GM10248 (cell line): ENCODE measurements at regions of chr11 and their contacts with region 1.

Region 1: GRCh38 chr11:122754553-122755322 is 83.6 kb upstream of the CRTAM start:
- DNase-seq: peak; percentile 50
- CTCF ChIP-seq: peak; percentile 57

Region 2: GRCh38 chr11:122601141-122602125 is 153.3 kb before region 1 on chr11:
- CTCF ChIA-PET with region 1: no interaction called
- POLR2A ChIA-PET with region 1: no interaction called
- DNase-seq: no peak
- CTCF ChIP-seq: no peak

Region 3: DNA sequence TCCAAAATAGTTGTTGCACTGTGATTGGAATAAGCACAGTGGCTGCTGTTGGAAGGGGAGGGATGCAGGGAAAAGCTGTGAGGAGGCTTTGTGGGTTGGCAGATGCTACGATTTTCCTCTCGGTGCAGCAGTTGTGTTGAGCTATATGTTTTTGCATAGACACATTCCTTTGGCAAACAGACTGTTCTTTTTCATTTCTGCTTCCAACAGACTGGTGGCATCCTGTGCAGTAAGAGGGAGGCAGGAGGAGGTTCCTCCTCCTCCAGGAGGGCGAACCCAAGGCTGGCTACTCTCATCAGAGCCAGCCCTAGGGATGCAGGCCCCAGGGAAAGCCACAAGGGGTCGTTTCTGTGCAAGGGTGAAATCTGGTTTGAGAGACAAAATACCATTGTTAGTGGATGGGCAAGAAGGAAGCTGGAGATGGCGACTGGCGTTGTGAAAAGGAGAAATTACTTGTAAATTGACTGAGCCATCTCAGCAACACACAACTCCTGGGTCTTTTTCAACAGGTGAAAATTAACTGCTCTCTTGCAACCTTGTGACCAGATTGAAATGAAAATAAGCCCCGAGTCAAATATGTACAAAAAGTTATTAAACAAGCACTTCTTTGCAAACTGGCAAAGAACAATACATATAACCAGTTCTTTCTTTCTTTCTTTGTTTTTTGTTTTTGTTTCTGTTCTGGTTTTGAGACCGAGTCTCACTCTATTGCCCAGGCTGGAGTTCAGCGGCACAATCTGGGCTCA is 125.8 kb before region 1 on chr11:
- CTCF ChIA-PET with region 1: interaction called, 117 read pairs
- POLR2A ChIA-PET with region 1: no interaction called
- DNase-seq: peak; percentile 65
- CTCF ChIP-seq: peak; percentile 80

Region 4: DNA sequence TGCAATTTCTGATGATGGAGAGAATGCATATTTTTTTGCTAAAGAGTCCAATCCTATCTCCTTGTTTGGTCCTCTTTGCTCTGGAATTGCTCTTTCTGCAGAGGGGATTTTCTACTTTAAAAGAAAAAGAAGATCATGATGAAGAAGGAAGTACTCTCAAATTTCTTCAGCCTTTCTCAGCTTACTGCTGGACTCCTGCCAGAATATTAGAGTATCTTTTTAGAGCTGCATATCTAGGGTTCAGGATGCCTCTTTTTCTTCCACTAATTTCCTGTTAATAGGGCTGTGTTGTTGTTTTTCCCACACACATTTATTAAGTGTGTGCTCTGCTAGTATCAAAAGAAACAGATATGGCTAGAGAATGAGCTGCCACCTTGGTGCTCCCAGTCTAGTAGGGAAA is 81.0 kb before region 1 on chr11:
- CTCF ChIA-PET with region 1: interaction called, 13 read pairs
- POLR2A ChIA-PET with region 1: no interaction called
- DNase-seq: no peak
- CTCF ChIP-seq: no peak

Region 5: GRCh38 chr11:122711831-122712381 is 42.8 kb before region 1 on chr11:
- CTCF ChIA-PET with region 1: interaction called, 29 read pairs
- POLR2A ChIA-PET with region 1: no interaction called
- DNase-seq: no peak
- CTCF ChIP-seq: peak; percentile 18

Region 6: GRCh38 chr11:122743949-122744348 is 10.8 kb before region 1 on chr11:
- CTCF ChIA-PET with region 1: interaction called, 55 read pairs
- POLR2A ChIA-PET with region 1: interaction called, 4 read pairs
- DNase-seq: peak; percentile 72
- CTCF ChIP-seq: no peak

Region 7: DNA sequence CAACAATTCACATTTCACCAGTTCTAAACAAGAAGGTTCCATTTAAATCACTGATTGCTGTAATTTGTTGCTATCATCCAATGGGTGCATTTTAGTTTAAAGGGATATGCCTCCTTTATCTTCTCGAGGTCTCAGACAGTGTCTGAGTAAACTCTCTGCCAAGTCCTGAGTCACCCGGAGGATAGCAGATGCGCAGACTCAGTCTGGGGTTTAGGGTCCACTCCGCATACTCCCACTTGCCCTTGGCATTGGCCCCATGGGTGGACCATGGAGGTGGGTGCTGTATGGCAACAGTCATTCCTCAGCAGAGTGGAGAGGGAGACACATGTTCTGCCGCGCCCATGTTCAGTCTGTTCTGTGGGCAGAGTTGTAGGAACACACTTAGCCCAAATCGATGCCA is 18.2 kb after region 1 on chr11:
- CTCF ChIA-PET with region 1: interaction called, 37 read pairs
- POLR2A ChIA-PET with region 1: no interaction called
- DNase-seq: no peak
- CTCF ChIP-seq: no peak